ENCODE measurements at regions of chr19 and their contacts with region 1.

Region 1: DNA sequence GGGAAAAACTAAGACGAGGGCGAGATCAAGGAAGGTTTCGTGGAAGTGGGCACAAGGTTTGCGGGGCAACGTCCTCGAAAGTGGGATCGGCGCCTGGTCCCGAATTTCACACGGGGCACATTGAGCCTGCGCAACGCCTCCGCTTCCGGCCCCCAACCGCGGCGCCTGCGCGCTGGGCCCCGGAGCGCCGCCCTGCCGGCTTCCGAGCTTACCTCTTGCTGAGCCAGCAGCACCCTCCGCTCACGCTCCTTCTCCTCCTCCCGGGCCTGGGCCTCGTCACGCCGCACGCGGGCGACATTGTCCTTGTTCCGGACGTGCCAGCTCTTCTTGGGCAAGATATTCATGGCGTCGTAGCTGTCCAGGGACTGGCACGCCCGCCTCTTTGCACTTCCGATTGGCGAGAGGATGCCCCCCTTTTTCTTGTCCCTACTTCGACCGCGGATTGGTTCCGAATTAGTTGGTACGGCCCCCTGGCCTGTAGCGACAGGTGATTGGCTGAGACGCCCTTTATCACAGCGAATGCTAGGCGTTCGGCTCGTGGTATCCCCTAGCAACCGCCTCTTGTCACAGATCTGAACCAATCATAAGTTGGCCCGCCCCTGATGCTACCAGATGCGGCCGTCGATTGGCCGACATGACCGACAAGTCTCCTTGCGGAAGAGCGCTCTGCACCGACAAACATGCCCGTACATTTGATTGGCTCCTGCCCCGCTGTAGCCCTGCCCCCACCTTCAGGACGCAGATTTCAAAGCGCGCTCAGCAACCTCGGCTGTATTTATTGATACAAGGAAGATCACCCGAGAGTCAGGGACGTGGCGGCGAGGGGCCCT is at the start of gene LENG1:
- DNase-seq: peak; percentile 80 to 100 (median 99)
- ATAC-seq: peak; percentile 91
- H3K4me3 ChIP-seq: peak within 1 kb of the TSS; percentile 78
- H3K4me3 Mint-ChIP-seq: peak within 1 kb of the TSS; percentile 91 to 100 (median 98)
- H3K27ac ChIP-seq: peak within 1 kb of the TSS; percentile 87
- H3K27ac Mint-ChIP-seq: peak within 1 kb of the TSS; percentile 95 to 100 (median 99)
- H3K4me1 ChIP-seq: peaks cover 35 to 53% of the 10 kb centered on the region in 2 donors
- H3K4me1 Mint-ChIP-seq: peaks cover 47 to 88% (median 65%) of the 10 kb centered on the region in 7 donors
- H3K27me3 ChIP-seq: no peaks in the 10 kb centered on the region
- H3K27me3 Mint-ChIP-seq: no peaks in the 10 kb centered on the region
- total RNA-seq, gene LENG1: 7.1 to 20.4 (median 11.8) TPM

Region 2: DNA sequence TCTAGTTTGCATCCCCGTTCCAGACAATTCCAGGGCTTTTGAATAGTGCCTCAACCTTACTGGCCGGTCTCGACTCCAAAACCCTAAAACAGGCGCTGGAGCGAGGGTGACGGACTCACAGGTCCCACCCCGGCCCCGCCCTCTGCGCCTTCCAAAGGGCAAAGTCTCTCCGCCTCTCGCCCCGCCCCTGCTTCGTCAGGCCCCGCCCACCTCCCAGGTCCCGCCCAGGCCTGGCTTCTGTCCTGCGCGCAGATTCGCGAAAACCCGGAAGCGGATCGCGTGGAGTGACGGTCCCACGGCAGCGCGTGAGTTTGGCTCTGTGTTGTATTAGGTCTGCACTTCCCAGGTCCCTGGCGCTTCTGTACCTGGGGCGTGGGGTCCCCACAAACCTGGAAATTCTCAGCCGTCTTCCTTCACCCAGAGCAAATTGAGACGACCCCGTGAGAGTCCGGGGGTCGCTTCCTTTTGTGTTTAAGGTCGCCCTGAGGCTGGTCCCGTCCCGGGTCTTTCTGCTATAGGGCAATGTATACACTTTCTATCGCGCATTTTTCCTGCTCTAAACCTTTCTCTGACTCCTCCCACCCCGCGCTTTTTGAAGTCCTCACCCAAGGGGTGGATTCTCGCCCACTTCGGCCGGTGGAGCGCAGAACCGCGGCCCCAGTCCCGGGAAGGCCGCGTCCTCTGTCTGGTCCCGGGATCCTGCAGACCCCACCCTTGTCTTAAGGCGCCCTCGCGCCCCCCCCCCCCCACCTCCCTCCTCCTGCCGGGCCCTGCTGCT is 691.9 kb before region 1 on chr19 and contains the start of gene ZNF813:
- CTCF ChIA-PET with region 1: no interaction called
- POLR2A ChIA-PET with region 1: no interaction called
- intact Hi-C with region 1: loop called in 1 of 2 experiments (anchors 2 kb)
- DNase-seq: peak; percentile 81 to 95 (median 92)
- ATAC-seq: peak; percentile 100
- H3K4me3 ChIP-seq: peak within 1 kb of the TSS; percentile 74
- H3K4me3 Mint-ChIP-seq: peak within 1 kb of the TSS; percentile 88 to 96 (median 94)
- H3K27ac ChIP-seq: peak within 1 kb of the TSS; percentile 73
- H3K27ac Mint-ChIP-seq: peak within 1 kb of the TSS; percentile 76 to 96 (median 90)
- H3K4me1 ChIP-seq: no peaks in the 10 kb centered on the region
- H3K4me1 Mint-ChIP-seq: peaks cover 20 to 45% (median 31%) of the 10 kb centered on the region in 7 donors
- H3K27me3 ChIP-seq: no peaks in the 10 kb centered on the region
- H3K27me3 Mint-ChIP-seq: peaks cover 0 to 24% (median 12%) of the 10 kb centered on the region in 5 donors
- total RNA-seq, gene ZNF813: 2.5 to 11.2 (median 4.6) TPM

Region 3: GRCh38 chr19:53982611-53983010 is 177.0 kb before region 1 on chr19:
- CTCF ChIA-PET with region 1: no interaction called
- POLR2A ChIA-PET with region 1: no interaction called
- intact Hi-C with region 1: no loop called
- DNase-seq: no peak
- ATAC-seq: peak; percentile 50
- H3K4me3 ChIP-seq: no peak overlapping the region
- H3K4me3 Mint-ChIP-seq: peak overlapping the region in 1 of 10 donors; percentile 81
- H3K27ac ChIP-seq: no peak overlapping the region
- H3K27ac Mint-ChIP-seq: no peak overlapping the region
- H3K4me1 ChIP-seq: peaks cover 0 to 5% of the 10 kb centered on the region in 2 donors
- H3K4me1 Mint-ChIP-seq: peaks cover 11 to 36% (median 27%) of the 10 kb centered on the region in 7 donors
- H3K27me3 ChIP-seq: peaks cover 6 to 22% of the 10 kb centered on the region in 2 donors
- H3K27me3 Mint-ChIP-seq: peaks cover 34 to 41% (median 37%) of the 10 kb centered on the region in 5 donors

Region 4: GRCh38 chr19:54073829-54074228 is 85.7 kb before region 1 on chr19:
- CTCF ChIA-PET with region 1: no interaction called
- POLR2A ChIA-PET with region 1: no interaction called
- intact Hi-C with region 1: no loop called
- DNase-seq: no peak
- ATAC-seq: no peak
- H3K4me3 ChIP-seq: no peak overlapping the region
- H3K4me3 Mint-ChIP-seq: no peak overlapping the region
- H3K27ac ChIP-seq: no peak overlapping the region
- H3K27ac Mint-ChIP-seq: no peak overlapping the region
- H3K4me1 ChIP-seq: no peaks in the 10 kb centered on the region
- H3K4me1 Mint-ChIP-seq: no peaks in the 10 kb centered on the region
- H3K27me3 ChIP-seq: no peaks in the 10 kb centered on the region
- H3K27me3 Mint-ChIP-seq: peaks cover 0 to 22% (median 0%) of the 10 kb centered on the region in 5 donors

Region 5: DNA sequence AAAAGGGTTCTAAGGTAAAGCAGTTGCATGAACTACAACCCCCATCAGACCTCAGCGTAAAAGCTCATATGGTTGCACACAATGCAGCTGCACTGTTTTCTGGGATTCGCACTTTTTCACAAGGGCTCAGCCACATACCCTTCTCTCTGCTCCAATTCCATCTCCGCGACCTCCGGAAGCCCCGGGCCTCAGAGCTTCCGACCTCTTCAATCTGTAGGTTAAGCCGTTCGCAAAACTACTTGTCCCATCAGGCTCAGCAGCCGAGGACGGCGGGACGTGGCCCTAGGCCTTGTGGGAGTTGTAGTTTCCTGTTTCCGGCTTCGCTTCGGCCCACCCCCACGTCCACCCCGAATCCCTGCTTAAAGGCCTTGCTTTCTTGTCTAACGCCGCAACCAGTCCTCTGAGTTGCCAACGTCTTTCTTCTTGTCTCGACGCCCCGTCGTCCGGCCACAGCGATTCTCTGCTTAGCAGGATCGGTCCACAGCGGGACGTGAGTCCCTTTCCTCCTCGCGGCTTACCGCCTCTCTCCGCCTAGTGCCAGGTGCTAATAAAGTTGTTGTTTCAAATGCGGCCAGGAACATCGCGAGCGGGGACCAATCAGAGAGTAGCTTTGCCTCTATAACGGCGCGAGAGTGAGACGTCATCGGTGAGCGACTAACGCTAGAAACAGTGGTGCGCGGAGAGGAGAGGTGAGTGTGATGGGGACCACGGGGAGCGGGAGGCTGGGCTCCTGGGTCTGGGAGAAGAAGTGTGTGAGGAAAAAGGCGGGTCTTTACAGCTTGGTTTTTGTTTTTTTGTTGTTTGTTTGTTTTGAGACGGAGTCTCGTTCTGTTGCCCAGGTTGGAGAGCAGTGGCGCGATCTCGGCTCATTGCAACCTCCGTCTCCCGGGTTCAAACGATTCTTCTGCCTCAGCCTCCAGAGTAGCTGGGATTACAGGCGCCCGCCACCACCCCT is 44.2 kb before region 1 on chr19 and contains the starts of genes PRPF31 and TFPT:
- CTCF ChIA-PET with region 1: no interaction called
- POLR2A ChIA-PET with region 1: interaction called, 34 read pairs
- intact Hi-C with region 1: loop called (anchors 1 kb)
- DNase-seq: peak; percentile 80 to 98 (median 97)
- ATAC-seq: peak; percentile 92
- H3K4me3 ChIP-seq: peak within 1 kb of the TSS; percentile 94
- H3K4me3 Mint-ChIP-seq: peak within 1 kb of the TSS; percentile 86 to 96 (median 94)
- H3K27ac ChIP-seq: peak within 1 kb of the TSS; percentile 88
- H3K27ac Mint-ChIP-seq: peak within 1 kb of the TSS; percentile 88 to 97 (median 94)
- H3K4me1 ChIP-seq: peaks cover 11 to 20% of the 10 kb centered on the region in 2 donors
- H3K4me1 Mint-ChIP-seq: peaks cover 23 to 48% (median 42%) of the 10 kb centered on the region in 7 donors
- H3K27me3 ChIP-seq: no peaks in the 10 kb centered on the region
- H3K27me3 Mint-ChIP-seq: peaks cover 0 to 2% (median 0%) of the 10 kb centered on the region in 5 donors
- total RNA-seq, gene PRPF31: 51.8 to 82.1 (median 71.0) TPM
- total RNA-seq, gene TFPT: 13.4 to 46.5 (median 14.6) TPM

Region 6: DNA sequence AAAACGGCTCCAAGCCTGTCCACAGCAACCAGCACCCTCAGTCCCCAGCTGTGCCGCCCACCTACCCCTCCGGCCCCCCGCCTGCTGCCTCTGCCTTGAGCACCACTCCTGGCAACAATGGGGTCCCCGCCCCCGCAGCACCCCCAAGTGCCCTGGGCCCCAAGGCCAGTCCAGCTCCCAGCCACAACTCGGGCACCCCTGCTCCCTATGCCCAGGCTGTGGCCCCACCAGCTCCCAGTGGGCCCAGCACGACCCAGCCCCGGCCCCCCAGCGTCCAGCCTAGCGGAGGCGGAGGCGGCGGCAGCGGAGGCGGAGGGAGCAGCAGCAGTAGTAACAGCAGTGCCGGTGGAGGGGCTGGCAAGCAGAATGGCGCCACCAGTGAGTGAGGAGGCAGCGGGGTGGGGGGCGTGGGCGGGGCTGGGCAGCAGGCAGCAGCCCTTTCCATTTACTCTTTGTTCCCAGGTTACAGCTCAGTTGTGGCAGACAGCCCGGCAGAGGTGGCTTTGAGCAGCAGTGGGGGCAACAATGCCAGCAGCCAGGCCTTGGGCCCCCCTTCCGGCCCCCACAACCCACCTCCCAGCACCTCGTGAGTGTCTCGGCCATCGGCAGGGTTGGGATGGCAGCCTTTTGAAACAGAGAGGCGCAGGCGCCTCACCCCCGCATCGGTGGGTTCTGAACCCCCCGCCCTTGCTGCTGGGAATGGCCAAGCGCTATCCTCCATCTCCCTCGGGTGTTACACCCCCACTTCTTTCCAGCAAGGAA is 11.2 kb before region 1 on chr19:
- CTCF ChIA-PET with region 1: interaction called, 3 read pairs
- POLR2A ChIA-PET with region 1: interaction called, 173 read pairs
- intact Hi-C with region 1: no loop called
- DNase-seq: no peak
- ATAC-seq: no peak
- H3K4me3 ChIP-seq: no peak overlapping the region
- H3K4me3 Mint-ChIP-seq: no peak overlapping the region
- H3K27ac ChIP-seq: no peak overlapping the region
- H3K27ac Mint-ChIP-seq: no peak overlapping the region
- H3K4me1 ChIP-seq: peaks cover 0 to 4% of the 10 kb centered on the region in 2 donors
- H3K4me1 Mint-ChIP-seq: peaks cover 2 to 24% (median 8%) of the 10 kb centered on the region in 7 donors
- H3K27me3 ChIP-seq: no peaks in the 10 kb centered on the region
- H3K27me3 Mint-ChIP-seq: no peaks in the 10 kb centered on the region

Region 7: GRCh38 chr19:54448774-54449700 is 289.5 kb after region 1 on chr19 and contains the start of gene LENG8:
- CTCF ChIA-PET with region 1: no interaction called
- POLR2A ChIA-PET with region 1: no interaction called
- intact Hi-C with region 1: loop called in 1 of 2 experiments (anchors 1 kb)
- DNase-seq: peak; percentile 95 to 99 (median 98)
- ATAC-seq: peak; percentile 94
- H3K4me3 ChIP-seq: peak within 1 kb of the TSS; percentile 85
- H3K4me3 Mint-ChIP-seq: peak within 1 kb of the TSS; percentile 93 to 99 (median 97)
- H3K27ac ChIP-seq: peak within 1 kb of the TSS; percentile 94
- H3K27ac Mint-ChIP-seq: peak within 1 kb of the TSS; percentile 97 to 100 (median 100)
- H3K4me1 ChIP-seq: peaks cover 19 to 39% of the 10 kb centered on the region in 2 donors
- H3K4me1 Mint-ChIP-seq: peaks cover 31 to 61% (median 54%) of the 10 kb centered on the region in 7 donors
- H3K27me3 ChIP-seq: no peaks in the 10 kb centered on the region
- H3K27me3 Mint-ChIP-seq: peaks cover 0 to 3% (median 0%) of the 10 kb centered on the region in 5 donors
- total RNA-seq, gene LENG8: 238 to 685 (median 503) TPM

Region 8: DNA sequence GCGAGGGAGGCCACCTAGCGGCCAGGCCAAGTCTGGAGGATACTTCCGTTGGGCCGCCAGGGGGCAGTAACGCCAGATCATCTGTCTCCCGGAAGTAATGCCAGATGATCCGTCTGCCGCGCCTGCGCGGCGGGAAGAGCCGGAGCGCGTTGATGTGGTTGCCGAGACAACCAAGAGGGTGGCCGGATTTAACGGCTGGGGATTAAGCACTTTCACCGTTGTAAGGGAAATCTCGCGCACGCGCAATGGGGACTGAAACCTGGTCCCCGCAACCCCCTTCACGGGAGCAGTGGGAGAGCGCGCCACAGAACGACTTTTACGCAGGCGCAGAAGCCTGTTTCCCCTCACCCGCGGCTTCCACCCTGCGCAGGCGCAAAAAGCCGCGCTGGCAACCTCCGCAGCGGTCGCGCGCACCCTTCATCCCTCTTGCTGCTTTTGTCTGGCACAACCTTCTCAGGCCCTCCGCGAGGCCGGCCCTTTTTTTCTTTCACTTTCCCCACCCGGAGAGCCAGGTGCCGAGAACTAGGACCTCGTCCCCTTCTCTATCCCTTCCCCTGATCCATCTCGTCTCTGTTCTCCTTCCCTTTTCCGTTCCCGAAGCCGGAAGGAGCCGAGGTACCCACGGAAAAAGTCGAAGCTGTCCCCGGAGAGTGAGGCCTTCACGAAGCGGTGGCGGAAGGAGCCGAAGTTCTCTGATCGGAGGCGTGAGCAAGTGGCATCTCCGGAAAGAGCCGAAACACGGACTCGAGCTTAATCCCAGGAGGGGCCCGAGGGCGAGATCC is 1494.4 kb after region 1 on chr19:
- CTCF ChIA-PET with region 1: no interaction called
- POLR2A ChIA-PET with region 1: no interaction called
- intact Hi-C with region 1: loop called in 1 of 2 experiments (anchors 10 kb)
- DNase-seq: peak; percentile 95 to 100 (median 100)
- ATAC-seq: peak; percentile 83
- H3K4me3 ChIP-seq: peak overlapping the region; percentile 98
- H3K4me3 Mint-ChIP-seq: peak overlapping the region; percentile 83 to 99 (median 96)
- H3K27ac ChIP-seq: peak overlapping the region; percentile 99
- H3K27ac Mint-ChIP-seq: peak overlapping the region; percentile 95 to 100 (median 99)
- H3K4me1 ChIP-seq: peaks cover 30 to 36% of the 10 kb centered on the region in 2 donors
- H3K4me1 Mint-ChIP-seq: peaks cover 29 to 55% (median 39%) of the 10 kb centered on the region in 7 donors
- H3K27me3 ChIP-seq: no peaks in the 10 kb centered on the region
- H3K27me3 Mint-ChIP-seq: peaks cover 0 to 2% (median 0%) of the 10 kb centered on the region in 5 donors